HEK293 (cell line): ENCODE measurements at regions of chr3 and their contacts with region 1.

Region 1: DNA sequence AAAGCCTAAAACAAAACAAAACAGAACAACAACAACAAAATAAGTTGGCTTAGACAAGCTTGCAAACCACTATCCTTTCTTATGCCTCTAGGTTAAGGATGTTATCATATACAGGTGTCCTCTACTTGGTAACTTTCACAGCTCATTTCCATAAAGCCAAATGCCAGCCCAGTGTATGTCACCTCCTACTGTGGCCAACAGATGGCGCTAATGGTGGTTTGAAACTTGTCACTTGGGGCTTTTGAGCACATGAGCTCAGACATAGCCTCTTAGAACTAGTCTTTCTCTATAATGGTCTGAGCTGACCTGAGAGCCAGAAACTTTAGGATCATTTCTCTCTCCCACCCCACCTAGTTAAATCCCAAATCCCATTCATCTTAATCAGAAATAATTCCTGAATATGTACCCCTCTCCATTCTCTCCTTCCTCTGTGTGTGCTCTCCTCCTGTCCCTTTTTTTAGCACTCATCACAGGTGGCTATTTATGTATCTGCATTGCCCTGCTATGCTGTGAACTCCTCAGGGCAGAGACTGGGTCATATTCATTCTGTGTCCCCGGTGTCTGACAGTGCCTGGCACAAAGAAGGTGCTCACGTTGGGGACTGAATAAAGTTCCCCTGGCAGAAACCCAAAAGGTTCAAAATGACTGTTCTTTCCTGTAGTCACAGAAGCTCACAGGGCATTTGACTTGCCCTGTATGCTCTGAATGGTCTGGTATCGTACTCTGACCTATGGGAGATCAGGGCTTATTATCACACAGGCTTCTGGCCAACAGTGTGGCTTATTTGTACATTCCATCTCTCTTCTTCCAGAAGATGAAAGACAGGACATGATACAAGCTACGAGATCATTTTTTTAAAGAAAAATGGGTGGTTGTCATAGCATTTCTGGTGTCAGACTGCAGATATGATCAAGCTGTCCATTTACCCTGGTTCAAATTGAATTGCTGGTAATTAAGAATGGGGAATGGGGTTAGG is 319.3 kb upstream of the AZI2 start:
- H3K4me3 ChIP-seq: no peak overlapping the region
- H3K27ac ChIP-seq: no peak overlapping the region
- H3K4me1 ChIP-seq: no peaks in the 10 kb centered on the region
- CTCF ChIP-seq: peak; percentile 13; the same call in 1 of the 2 replicates

Region 2: GRCh38 chr3:28646435-28646834 is 21.5 kb before region 1 on chr3:
- CTCF ChIA-PET with region 1: interaction called, 12 read pairs
- POLR2A ChIA-PET with region 1: no interaction called
- H3K4me3 ChIP-seq: no peak overlapping the region
- H3K27ac ChIP-seq: no peak overlapping the region
- H3K4me1 ChIP-seq: no peaks in the 10 kb centered on the region
- CTCF ChIP-seq: no peak

Region 3: GRCh38 chr3:28726840-28727239 is 58.9 kb after region 1 on chr3:
- CTCF ChIA-PET with region 1: interaction called, 20 read pairs
- POLR2A ChIA-PET with region 1: interaction called, 6 read pairs
- H3K4me3 ChIP-seq: no peak overlapping the region
- H3K27ac ChIP-seq: no peak overlapping the region
- H3K4me1 ChIP-seq: no peaks in the 10 kb centered on the region
- CTCF ChIP-seq: no peak